Upper lobe of right lung (tissue), 1 donor: ENCODE measurements at regions of chr6 and their contacts with region 1.

Region 1: GRCh38 chr6:108558372-108559096 is 2.2 kb upstream of the FOXO3 start:
- DNase-seq: peak; percentile 99
- ATAC-seq: peak; percentile 69
- H3K4me3 ChIP-seq: peak overlapping the region; percentile 89
- H3K27ac ChIP-seq: peak overlapping the region; percentile 99
- H3K4me1 ChIP-seq: peaks cover 30% of the 10 kb centered on the region
- H3K27me3 ChIP-seq: no peaks in the 10 kb centered on the region
- CTCF ChIP-seq: no peak

Region 2: DNA sequence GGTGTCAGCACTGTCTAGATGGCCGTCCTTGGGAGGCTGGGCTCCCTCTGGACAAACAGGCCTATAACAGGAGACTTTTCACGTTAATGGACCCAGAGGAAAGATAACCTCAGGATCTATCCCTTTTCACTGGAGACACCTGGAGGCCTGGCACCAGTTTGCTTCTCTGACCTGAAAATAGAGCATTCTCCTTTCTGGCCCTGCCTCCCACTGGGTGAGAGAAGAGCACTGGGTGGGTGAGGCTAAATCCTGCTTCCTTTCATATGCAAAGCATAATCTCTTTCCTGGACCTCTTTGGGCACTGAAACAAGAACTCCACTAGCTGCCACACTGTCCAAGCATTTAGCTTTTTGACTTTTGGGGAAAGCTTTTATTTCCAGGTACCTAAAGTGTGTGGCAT is 80.5 kb after region 1 on chr6:
- intact Hi-C with region 1: no loop called
- DNase-seq: no peak
- ATAC-seq: no peak
- H3K4me3 ChIP-seq: no peak overlapping the region
- H3K27ac ChIP-seq: no peak overlapping the region
- H3K4me1 ChIP-seq: peaks cover 35% of the 10 kb centered on the region
- H3K27me3 ChIP-seq: no peaks in the 10 kb centered on the region
- CTCF ChIP-seq: no peak

Region 3: GRCh38 chr6:108673602-108674001 is 115.1 kb after region 1 on chr6:
- intact Hi-C with region 1: loop called (anchors 10 kb)
- DNase-seq: no peak
- ATAC-seq: peak; percentile 50
- H3K4me3 ChIP-seq: no peak overlapping the region
- H3K27ac ChIP-seq: no peak overlapping the region
- H3K4me1 ChIP-seq: peaks cover 63% of the 10 kb centered on the region
- H3K27me3 ChIP-seq: no peaks in the 10 kb centered on the region
- CTCF ChIP-seq: no peak

Region 4: DNA sequence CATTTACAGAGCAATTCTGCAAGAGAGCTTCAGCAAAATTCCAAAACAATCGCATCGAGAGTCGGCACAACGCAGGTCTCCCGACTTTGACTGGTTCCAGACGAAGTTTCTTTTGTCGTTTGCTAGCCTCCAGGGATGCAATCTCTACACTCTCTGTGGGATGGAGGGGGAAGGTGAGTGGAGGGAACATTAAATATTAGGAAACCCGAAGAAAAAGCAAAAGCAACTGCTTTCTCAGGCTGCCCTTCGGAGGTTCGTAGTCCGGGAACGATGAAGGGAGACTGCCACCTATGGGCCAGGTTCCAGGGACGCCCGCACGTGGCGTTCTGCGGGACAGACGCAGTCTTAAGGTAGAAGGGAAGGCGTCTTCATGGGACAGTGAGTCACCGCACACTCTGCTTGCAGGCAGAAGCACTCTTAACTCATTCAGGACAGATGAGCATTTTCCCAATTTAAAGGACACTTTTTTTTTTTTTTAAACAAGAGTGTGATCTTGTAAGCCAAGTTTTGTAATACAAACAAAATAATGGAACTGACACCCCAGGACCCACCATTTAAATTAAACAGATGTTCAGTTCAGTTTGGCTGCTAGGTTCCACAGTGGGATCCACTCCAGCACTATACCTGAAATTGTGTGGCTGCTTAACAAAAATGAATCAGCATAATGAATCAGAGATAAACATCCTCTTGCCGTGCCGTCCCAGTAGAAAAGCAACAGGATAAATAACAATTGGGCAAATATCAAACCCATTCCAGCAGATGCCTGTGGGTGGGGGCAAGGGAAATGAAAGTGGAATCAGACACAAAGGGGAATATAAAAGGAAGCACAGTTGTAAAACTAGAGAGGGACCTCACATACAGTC is 223.9 kb after region 1 on chr6:
- intact Hi-C with region 1: loop called (anchors 10 kb)
- DNase-seq: peak; percentile 92
- ATAC-seq: peak; percentile 98
- H3K4me3 ChIP-seq: peak overlapping the region; percentile 62
- H3K27ac ChIP-seq: no peak overlapping the region
- H3K4me1 ChIP-seq: peaks cover 15% of the 10 kb centered on the region
- H3K27me3 ChIP-seq: no peaks in the 10 kb centered on the region
- CTCF ChIP-seq: peak; percentile 76